ENCODE measurements at regions of chr10 and their contacts with region 1.

Region 1: GRCh38 chr10:42552493-42553407 is 85.6 kb downstream of the ZNF33B start:
- DNase-seq: peak; percentile 95 to 98 (median 97)
- ATAC-seq: peak; percentile 98 to 100 (median 99)
- H3K4me3 ChIP-seq: peak overlapping the region; percentile 40 to 89 (median 68)
- H3K27ac ChIP-seq: peak overlapping the region in 11 of 12 donors; percentile 23 to 78 (median 63)
- H3K4me1 ChIP-seq: peaks cover 0 to 21% (median 12%) of the 10 kb centered on the region in 12 donors
- H3K27me3 ChIP-seq: no peaks in the 10 kb centered on the region
- CTCF ChIP-seq: no peak
- POLR2A ChIP-seq: peak in 1 of 2 donors; percentile 82

Region 2: DNA sequence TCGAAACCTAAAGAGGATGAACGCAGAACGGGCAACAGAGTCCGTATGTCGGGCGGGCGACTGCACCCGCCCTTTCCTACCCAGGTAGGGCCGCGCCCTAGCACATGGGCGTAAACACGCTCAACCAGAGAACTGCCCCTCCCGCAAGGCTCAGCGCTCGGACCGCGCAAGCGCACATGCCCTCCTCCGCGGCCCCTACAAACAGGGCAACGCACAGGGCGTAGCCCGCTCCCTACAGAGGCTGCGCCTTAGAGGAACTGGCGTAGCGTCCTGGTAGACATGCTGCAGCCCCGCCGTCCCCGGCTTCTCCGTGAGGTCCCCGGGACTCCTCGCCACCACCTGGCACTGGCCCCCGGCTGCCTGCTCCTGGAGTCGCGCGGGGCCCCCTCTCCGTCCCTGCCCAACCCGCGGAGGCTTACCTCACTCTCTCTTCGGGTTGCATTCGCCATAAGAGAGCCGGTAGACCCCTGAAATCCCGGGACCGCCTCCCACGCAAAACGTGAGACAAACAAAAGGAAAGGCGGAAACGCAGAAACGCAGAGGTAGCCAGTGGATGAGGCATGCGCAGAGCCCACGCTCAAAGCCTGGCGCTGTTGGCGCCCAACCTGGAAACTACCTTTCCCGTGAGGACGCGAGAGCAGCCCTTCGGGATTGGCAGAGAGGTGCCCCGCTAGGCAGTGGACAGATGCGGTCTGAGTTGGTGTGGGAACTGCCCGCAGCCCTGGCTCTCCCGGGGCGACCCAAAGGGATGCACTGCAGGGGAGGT is 85.5 kb after region 1 on chr10 and contains the start of gene ZNF33B:
- intact Hi-C with region 1: loop called in 7 of 10 experiments (anchors 1 to 10 kb)
- DNase-seq: peak; percentile 92 to 97 (median 96)
- ATAC-seq: peak; percentile 99
- H3K4me3 ChIP-seq: peak within 1 kb of the TSS; percentile 63 to 98 (median 85)
- H3K27ac ChIP-seq: peak within 1 kb of the TSS; percentile 76 to 98 (median 92)
- H3K4me1 ChIP-seq: peaks cover 0 to 11% (median 6%) of the 10 kb centered on the region in 12 donors
- H3K27me3 ChIP-seq: no peaks in the 10 kb centered on the region
- CTCF ChIP-seq: peak in 1 of 12 donors; percentile 6
- POLR2A ChIP-seq: peak in 1 of 2 donors; percentile 67
- total RNA-seq, gene ZNF33B: 7.7 to 20.5 (median 10.4) TPM